Brain microvascular endothelial cell (primary cell): ENCODE measurements at regions of chr17 and their contacts with region 1.

Region 1: GRCh38 chr17:66715745-66716156 is 119.2 kb upstream of the CACNG5 start:
- DNase-seq: peak; percentile 68
- H3K4me3 ChIP-seq: no peak overlapping the region
- H3K27ac ChIP-seq: no peak overlapping the region
- H3K27me3 ChIP-seq: no peaks in the 10 kb centered on the region
- CTCF ChIP-seq: peak; percentile 73

Region 2: GRCh38 chr17:66906321-66907278 is 190.8 kb after region 1 on chr17:
- in situ Hi-C with region 1: loop called (anchors 25 kb)
- DNase-seq: peak; percentile 79
- H3K4me3 ChIP-seq: no peak overlapping the region
- H3K27ac ChIP-seq: no peak overlapping the region
- H3K27me3 ChIP-seq: no peaks in the 10 kb centered on the region
- CTCF ChIP-seq: peak; percentile 97